Activated naive CD4-positive, alpha-beta T cell treated with anti-CD3 and anti-CD28 coated beads, Interleukin-2, amount 10 ng/mL, durations not matched to agents 7 days and 5 days (primary cell): ENCODE measurements at regions of chr5 and their contacts with region 1.

Region 1: GRCh38 chr5:151447174-151448037 is at the start of gene SLC36A1:
- DNase-seq: peak; percentile 93
- H3K4me3 Mint-ChIP-seq: peak within 1 kb of the TSS; percentile 80
- H3K27ac Mint-ChIP-seq: peak within 1 kb of the TSS; percentile 85
- H3K4me1 Mint-ChIP-seq: peaks cover 12% of the 10 kb centered on the region
- H3K27me3 Mint-ChIP-seq: peaks cover 22% of the 10 kb centered on the region

Region 2: DNA sequence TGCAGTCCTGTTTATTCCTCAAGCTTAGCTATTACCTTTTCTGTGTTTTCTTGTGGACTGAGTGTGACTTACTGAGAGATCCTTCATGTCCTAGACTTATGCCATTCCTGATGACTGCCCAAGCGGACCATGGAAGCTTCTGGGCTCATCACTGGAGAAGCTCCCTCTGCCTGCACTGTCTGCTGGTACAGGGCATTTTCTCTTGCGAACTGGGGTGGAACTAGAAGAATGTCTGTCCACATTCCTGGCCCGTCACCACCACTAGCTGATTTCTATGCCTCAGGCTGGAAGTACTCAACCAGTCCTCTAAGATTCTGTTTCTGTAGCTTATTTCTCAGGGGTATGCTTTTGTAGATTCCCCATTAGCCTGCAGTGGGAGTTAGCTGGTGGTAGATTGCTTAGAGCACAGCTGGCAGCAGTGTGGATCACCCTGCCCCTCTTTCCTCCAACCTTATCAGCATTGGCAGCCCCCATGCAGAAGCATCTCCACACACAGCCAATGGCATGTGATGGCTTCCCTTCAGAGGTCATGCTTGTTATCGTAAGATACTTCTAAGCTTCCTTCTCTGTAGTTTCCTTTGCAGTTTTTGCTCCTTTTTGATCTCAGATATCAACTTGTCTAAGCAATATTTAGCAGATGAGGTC is 12.4 kb after region 1 on chr5:
- CTCF ChIA-PET with region 1: interaction called, 19 read pairs
- DNase-seq: no peak
- H3K4me3 Mint-ChIP-seq: no peak overlapping the region
- H3K27ac Mint-ChIP-seq: no peak overlapping the region
- H3K4me1 Mint-ChIP-seq: no peaks in the 10 kb centered on the region
- H3K27me3 Mint-ChIP-seq: no peaks in the 10 kb centered on the region

Region 3: DNA sequence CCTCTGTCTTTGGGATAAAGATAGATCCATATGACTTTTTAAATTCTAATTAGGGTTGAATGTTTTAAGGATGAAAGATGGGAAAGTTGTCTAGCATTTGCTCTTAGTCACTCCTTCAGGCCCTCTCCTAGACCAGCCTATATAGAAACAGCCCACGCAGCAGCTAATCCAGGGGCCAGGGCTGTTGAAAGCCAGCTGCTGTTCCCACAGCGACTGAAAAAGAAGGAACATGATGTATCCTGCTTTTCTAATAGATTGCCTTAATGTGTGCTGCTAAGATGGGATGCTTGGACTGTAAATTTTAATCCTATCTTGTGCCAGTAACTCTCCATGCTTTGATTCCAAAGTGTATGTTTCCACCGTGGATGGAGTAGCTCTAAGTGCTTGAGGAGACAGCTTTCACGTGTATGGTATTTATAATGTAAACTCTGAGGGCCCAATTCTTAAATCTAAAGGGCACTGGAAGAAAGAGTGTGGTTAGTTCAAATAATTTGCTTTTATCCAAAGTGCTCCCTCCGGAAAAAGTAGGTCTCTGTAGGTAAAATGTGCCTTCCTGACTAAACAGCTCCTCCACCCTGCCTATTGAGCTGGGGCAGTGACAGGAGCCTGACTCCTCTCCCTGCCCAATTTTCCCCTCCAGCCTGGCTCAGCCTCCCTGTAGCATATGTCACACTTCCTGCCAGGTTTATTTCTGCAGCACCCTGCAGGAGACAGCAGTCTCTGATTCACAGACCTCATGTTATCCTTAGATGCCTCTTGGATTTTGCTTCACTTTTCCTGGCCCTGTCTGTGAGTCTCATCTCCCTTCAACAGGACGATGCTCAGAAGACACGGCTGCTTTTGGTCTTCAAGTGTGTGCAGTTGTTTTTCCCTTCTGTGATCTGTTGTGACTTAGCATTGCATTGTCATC is 33.2 kb after region 1 on chr5:
- CTCF ChIA-PET with region 1: no interaction called
- DNase-seq: no peak
- H3K4me3 Mint-ChIP-seq: no peak overlapping the region
- H3K27ac Mint-ChIP-seq: no peak overlapping the region
- H3K4me1 Mint-ChIP-seq: no peaks in the 10 kb centered on the region
- H3K27me3 Mint-ChIP-seq: no peaks in the 10 kb centered on the region

Region 4: GRCh38 chr5:151499501-151500035 is 52.2 kb after region 1 on chr5:
- CTCF ChIA-PET with region 1: interaction called, 13 read pairs
- DNase-seq: no peak
- H3K4me3 Mint-ChIP-seq: no peak overlapping the region
- H3K27ac Mint-ChIP-seq: no peak overlapping the region
- H3K4me1 Mint-ChIP-seq: peaks cover 5% of the 10 kb centered on the region
- H3K27me3 Mint-ChIP-seq: peaks cover 4% of the 10 kb centered on the region

Region 5: DNA sequence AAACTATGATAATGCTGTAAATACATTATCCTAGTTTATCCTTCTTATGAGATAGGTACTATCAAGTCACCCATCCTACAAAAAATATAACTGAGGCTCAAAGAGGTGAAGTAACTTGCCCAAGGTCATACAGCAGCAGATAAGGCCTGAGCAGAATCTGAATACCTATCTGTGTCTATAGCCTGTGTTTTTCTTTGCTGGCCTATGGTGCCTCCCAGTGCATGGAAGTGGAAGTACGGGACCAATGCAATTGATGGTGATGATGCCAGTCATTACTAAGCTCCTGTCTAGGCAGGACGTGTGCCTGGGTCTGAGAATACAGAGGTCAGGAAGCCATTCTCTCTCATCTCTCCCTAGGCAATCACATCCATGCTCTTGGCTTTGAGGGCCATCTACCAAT is 75.9 kb after region 1 on chr5:
- CTCF ChIA-PET with region 1: interaction called, 18 read pairs
- DNase-seq: peak; percentile 66
- H3K4me3 Mint-ChIP-seq: no peak overlapping the region
- H3K27ac Mint-ChIP-seq: no peak overlapping the region
- H3K4me1 Mint-ChIP-seq: peaks cover 2% of the 10 kb centered on the region
- H3K27me3 Mint-ChIP-seq: no peaks in the 10 kb centered on the region

Region 6: GRCh38 chr5:151637676-151638075 is 190.3 kb after region 1 on chr5:
- CTCF ChIA-PET with region 1: no interaction called
- DNase-seq: no peak
- H3K4me3 Mint-ChIP-seq: no peak overlapping the region
- H3K27ac Mint-ChIP-seq: no peak overlapping the region
- H3K4me1 Mint-ChIP-seq: peaks cover 8% of the 10 kb centered on the region
- H3K27me3 Mint-ChIP-seq: peaks cover 32% of the 10 kb centered on the region